Left cardiac atrium (tissue), 4 donors: ENCODE measurements at regions of chr10 and their contacts with region 1.

Region 1: GRCh38 chr10:12201543-12201942 is 5.6 kb downstream of the CDC123 start:
- DNase-seq: no peak
- ATAC-seq: no peak

Region 2: DNA sequence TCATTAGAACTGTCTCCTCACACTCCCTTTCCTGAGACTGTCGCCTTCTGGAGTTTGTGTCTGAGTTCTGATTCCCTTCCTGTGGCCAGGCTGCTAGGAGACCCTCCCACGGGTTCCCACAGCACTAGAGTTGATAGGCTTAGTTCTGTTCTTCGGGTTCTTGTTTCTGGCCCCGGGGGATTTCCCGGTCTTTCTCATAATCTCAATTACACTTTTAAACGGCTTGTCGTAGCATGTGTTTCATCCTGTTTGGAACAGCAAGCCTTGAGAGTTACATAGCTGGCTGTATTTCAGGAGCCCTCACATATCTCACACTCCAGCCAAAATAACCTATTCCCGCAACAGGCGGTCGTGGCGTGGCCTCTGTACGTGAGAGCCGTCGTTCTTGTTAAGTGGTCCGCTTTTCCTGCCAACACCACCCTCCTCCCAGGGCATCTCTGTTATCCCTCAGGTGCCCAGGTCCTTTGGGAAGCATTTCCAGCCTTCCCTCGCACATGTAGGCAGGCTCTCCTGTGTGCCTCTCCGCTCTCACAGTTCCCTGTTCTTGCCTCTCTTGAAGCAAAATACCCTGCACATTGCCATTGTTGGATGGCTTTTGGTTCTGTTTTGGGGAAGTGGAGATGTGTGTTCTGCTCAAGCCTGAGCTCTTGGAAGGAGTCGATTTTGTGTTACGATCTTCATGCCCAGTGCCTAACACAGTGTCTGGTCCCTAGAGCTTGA is 40.4 kb after region 1 on chr10:
- intact Hi-C with region 1: no loop called
- DNase-seq: peak; percentile 70
- ATAC-seq: peak; percentile 75 to 87

Region 3: GRCh38 chr10:12264204-12264940 is 62.8 kb after region 1 on chr10:
- intact Hi-C with region 1: no loop called
- DNase-seq: peak; percentile 84
- ATAC-seq: peak; percentile 91 to 95

Region 4: DNA sequence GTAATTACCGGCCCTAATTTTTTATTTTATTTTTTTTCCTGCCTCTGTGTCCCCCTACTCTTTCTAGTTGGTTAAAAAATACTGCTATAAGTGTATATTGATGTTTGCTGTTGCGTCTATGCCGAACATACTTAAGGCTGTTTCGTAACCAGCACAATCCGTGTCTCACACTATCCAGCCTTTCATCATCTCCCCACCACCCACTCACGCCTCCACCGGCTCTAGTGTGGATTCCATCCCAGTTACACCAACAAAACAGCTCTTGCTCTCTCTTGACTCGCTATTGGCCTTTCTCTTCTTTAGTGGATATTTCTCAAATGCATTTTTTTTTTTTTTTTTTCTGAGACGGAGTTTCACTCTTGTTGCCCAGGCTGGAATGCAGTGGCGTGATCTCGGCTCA is 77.7 kb after region 1 on chr10:
- intact Hi-C with region 1: no loop called
- DNase-seq: no peak
- ATAC-seq: peak in 1 of 2 donors; percentile 93

Region 5: GRCh38 chr10:12995425-12995861 is 793.9 kb after region 1 on chr10:
- intact Hi-C with region 1: loop called in 1 of 2 experiments (anchors 5 kb)
- DNase-seq: no peak
- ATAC-seq: no peak